ENCODE measurements at regions of chr10 and their contacts with region 1.

Region 1: GRCh38 chr10:7945469-7946192 is 108.9 kb upstream of the GATA3 start:
- DNase-seq: no peak
- ATAC-seq: no peak
- H3K4me3 ChIP-seq: no peak overlapping the region
- H3K4me3 Mint-ChIP-seq: no peak overlapping the region
- H3K27ac ChIP-seq: no peak overlapping the region
- H3K27ac Mint-ChIP-seq: peak overlapping the region; percentile 5
- H3K4me1 ChIP-seq: no peaks in the 10 kb centered on the region
- H3K4me1 Mint-ChIP-seq: peaks cover 54% of the 10 kb centered on the region
- H3K27me3 ChIP-seq: no peaks in the 10 kb centered on the region
- H3K27me3 Mint-ChIP-seq: no peaks in the 10 kb centered on the region
- CTCF ChIP-seq: no peak

Region 2: DNA sequence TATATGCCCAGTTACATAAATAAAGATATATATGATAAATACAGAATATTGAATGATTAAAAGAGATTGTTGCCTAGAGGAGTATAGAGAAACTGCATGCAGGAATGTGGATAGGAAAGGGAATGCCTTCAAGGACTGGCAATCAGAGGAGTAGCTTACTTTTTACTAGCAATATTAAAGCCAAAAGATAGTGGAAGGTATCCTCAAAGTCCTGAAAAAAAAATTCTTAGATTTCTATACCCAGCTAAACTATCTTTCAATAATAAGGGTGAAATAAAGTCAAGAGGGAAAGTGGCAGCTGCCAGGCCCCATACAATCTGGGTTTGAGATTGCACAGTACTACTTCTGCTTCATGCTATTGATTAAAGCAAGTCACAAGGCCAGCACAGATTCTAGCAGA is 842.0 kb after region 1 on chr10:
- CTCF ChIA-PET with region 1: no interaction called
- POLR2A ChIA-PET with region 1: no interaction called
- intact Hi-C with region 1: loop called in 1 of 2 experiments (anchors 10 kb)
- DNase-seq: no peak
- ATAC-seq: no peak
- H3K4me3 ChIP-seq: no peak overlapping the region
- H3K4me3 Mint-ChIP-seq: no peak overlapping the region
- H3K27ac ChIP-seq: no peak overlapping the region
- H3K27ac Mint-ChIP-seq: no peak overlapping the region
- H3K4me1 ChIP-seq: no peaks in the 10 kb centered on the region
- H3K4me1 Mint-ChIP-seq: no peaks in the 10 kb centered on the region
- H3K27me3 ChIP-seq: no peaks in the 10 kb centered on the region
- H3K27me3 Mint-ChIP-seq: peaks cover 2% of the 10 kb centered on the region
- CTCF ChIP-seq: no peak

Measured in CD8-positive, alpha-beta T cell (primary cell).